ENCODE measurements at regions of chr11 and their contacts with region 1.

Region 1: GRCh38 chr11:128884703-128885338 is 6.3 kb upstream of the KCNJ5 start:
- DNase-seq: peak; percentile 74
- ATAC-seq: peak; percentile 92
- H3K4me3 Mint-ChIP-seq: no peak overlapping the region
- H3K27ac Mint-ChIP-seq: no peak overlapping the region
- H3K4me1 Mint-ChIP-seq: no peaks in the 10 kb centered on the region
- H3K27me3 Mint-ChIP-seq: peaks cover 54% of the 10 kb centered on the region

Region 2: DNA sequence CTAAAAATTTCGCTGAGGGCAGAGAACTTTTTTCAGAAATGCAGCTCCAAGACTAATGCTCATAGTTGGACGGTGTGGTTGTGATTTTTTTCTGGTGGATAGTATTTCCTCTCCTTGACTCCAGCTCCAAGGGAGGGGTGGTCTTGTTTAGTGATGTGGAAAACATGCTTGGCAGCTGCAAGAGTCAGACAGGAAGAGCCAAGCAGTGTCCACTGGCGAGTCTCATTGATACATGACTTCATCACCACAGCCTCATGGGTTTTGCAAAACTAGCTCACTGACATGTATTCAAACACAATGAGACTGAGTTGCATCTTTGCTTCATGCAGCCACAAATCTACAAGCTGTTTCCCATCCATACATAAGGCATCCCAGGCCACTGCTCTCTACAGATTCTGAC is 10.4 kb before region 1 on chr11:
- CTCF ChIA-PET with region 1: interaction called, 19 read pairs
- POLR2A ChIA-PET with region 1: no interaction called
- intact Hi-C with region 1: no loop called
- DNase-seq: no peak
- ATAC-seq: no peak
- H3K4me3 Mint-ChIP-seq: no peak overlapping the region
- H3K27ac Mint-ChIP-seq: no peak overlapping the region
- H3K4me1 Mint-ChIP-seq: no peaks in the 10 kb centered on the region
- H3K27me3 Mint-ChIP-seq: no peaks in the 10 kb centered on the region

Region 3: DNA sequence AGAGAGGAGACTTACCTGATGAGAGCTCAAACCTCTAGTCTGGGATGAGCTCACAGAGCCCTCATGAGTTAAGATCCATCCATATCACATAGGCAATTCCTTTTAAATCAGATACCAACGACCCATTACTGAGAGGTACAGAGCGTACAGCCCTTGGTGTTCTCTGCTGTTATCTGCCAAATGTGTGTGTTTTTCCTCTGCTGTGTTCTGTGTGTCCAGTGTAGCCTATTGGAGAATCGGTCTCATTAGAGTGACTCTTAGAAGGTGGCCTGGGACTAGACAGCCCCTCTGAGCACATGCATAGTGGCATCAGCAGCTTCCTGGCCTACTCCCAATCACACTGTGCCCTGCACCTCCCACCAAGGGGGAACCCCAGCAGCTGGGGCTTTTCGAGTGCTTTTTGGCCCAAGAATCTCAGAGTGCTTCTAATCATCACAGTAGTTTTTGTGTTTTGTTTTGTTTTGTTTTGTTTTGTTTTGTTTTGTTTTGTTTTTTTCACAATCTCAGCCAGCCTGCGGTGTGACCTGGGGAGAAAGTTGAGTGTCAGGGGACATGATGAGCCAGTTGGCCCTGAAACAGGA is 32.4 kb after region 1 on chr11:
- CTCF ChIA-PET with region 1: interaction called, 108 read pairs
- POLR2A ChIA-PET with region 1: no interaction called
- intact Hi-C with region 1: no loop called
- DNase-seq: no peak
- ATAC-seq: no peak
- H3K4me3 Mint-ChIP-seq: no peak overlapping the region
- H3K27ac Mint-ChIP-seq: no peak overlapping the region
- H3K4me1 Mint-ChIP-seq: no peaks in the 10 kb centered on the region
- H3K27me3 Mint-ChIP-seq: peaks cover 13% of the 10 kb centered on the region

Region 4: DNA sequence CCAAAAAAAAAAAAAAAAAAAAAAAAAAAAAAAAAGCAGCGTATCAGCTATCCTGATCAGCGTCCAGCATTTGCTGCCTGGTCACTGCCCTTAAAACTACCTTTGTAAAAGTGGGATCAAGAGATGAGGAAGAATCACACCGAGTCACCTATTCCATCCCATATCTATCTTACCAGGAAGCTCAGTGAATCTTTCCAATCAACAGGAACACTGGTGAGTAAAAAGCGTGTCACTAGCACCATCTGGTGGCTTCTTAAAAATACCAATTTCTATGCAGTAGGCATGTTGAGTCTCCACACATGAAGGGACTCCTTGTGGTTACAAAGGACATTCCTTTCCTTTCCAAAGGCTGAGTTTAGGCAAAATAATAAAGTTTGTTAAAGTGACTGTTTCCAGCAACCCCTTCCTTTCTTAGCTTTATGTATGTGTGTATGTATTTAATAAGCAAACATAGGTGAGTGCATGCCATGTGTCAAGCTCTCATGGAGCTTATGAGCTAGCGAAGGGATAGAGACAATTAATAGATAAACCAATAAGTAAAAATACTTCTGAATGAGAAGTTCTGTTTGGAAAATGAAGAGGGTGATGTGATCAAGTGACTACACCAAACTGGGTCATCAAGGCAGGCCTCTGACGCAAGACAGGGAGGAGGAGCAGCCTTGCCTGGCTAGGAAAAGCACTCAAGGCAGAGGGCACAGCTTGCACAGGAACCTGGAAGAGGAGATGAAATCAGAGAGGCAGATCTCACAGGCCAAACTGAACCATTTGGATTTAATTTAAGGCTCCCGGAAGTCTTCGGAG is 71.8 kb after region 1 on chr11:
- CTCF ChIA-PET with region 1: interaction called, 162 read pairs
- POLR2A ChIA-PET with region 1: no interaction called
- intact Hi-C with region 1: loop called (anchors 1 kb)
- DNase-seq: peak; percentile 20
- ATAC-seq: peak; percentile 57
- H3K4me3 Mint-ChIP-seq: no peak overlapping the region
- H3K27ac Mint-ChIP-seq: no peak overlapping the region
- H3K4me1 Mint-ChIP-seq: peaks cover 2% of the 10 kb centered on the region
- H3K27me3 Mint-ChIP-seq: peaks cover 2% of the 10 kb centered on the region

Region 5: GRCh38 chr11:129117595-129118350 is 233.0 kb after region 1 on chr11:
- CTCF ChIA-PET with region 1: no interaction called
- POLR2A ChIA-PET with region 1: no interaction called
- intact Hi-C with region 1: loop called in 1 of 2 experiments (anchors 2 kb)
- DNase-seq: peak; percentile 62
- ATAC-seq: no peak
- H3K4me3 Mint-ChIP-seq: no peak overlapping the region
- H3K27ac Mint-ChIP-seq: no peak overlapping the region
- H3K4me1 Mint-ChIP-seq: peaks cover 11% of the 10 kb centered on the region
- H3K27me3 Mint-ChIP-seq: no peaks in the 10 kb centered on the region

Region 6: DNA sequence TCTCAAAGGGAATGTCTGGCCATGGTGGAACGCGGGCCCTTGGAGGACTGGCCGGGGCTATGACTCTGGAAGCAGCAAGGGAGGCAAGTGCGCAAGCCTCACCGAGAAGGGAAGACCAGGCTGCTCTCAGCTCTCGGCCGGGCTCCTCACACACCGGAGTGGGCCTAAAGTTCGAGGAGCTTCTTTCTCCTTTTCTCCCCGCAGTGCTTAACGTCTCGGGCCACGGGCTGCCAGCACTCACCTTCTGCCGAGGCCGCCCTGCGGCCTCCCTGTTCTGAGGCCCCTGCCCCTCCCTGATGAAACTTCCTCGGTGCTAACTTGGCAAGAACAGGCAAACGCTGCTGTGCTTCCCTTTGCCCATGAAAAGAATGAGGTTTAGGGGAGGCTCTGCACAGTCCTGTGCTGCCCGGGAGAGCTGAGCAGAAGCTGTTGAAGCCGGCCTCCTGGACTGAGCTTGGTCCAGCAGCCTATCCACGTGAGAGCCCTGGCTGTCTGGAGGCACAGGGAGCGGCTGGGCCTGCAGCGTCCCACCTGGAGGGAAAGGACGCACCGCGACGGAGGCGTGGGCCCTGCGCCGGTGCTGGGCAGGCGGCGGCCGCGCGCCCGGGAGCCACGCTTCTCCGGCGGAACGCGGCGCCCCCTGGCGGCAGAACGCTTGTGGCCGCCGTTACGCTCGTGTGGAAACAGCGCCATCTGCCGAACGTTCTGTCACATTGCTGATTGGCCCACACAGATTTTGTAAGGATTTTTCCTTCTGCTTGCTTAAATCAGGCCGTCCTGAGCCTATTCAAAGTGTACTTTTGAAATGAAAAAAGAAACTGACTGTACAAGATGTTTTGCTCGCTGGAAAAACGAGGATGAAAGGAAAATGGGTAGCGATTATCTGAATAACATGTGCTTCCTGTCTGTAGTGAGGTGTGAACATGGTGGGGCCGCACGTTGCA is 865.8 kb after region 1 on chr11:
- CTCF ChIA-PET with region 1: interaction called, 7 read pairs
- POLR2A ChIA-PET with region 1: no interaction called
- intact Hi-C with region 1: loop called in 1 of 2 experiments (anchors 5 kb)
- DNase-seq: peak; percentile 88
- ATAC-seq: peak; percentile 93
- H3K4me3 Mint-ChIP-seq: no peak overlapping the region
- H3K27ac Mint-ChIP-seq: no peak overlapping the region
- H3K4me1 Mint-ChIP-seq: peaks cover 3% of the 10 kb centered on the region
- H3K27me3 Mint-ChIP-seq: peaks cover 12% of the 10 kb centered on the region

Measured in activated CD4-positive, alpha-beta T cell treated with anti-CD3 and anti-CD28 coated beads for 36 hours (primary cell).